ENCODE measurements at regions of chrX and their contacts with region 1.

Region 1: GRCh38 chrX:97374266-97374665 is 490.6 kb downstream of the RPA4 start:
- DNase-seq: no peak
- ATAC-seq: no peak
- H3K4me3 ChIP-seq: no peak overlapping the region
- H3K27ac ChIP-seq: no peak overlapping the region
- H3K4me1 ChIP-seq: no peaks in the 10 kb centered on the region
- CTCF ChIP-seq: no peak
- EP300 ChIP-seq: no peak
- POLR2A ChIP-seq: no peak
- RAD21 ChIP-seq: no peak

Region 2: GRCh38 chrX:97389761-97390192 is 15.5 kb after region 1 on chrX:
- CTCF ChIA-PET with region 1: no interaction called
- POLR2A ChIA-PET with region 1: interaction called, 10 read pairs
- DNase-seq: peak in 1 of 2 experiments; percentile 55
- ATAC-seq: peak; percentile 56 to 85
- H3K4me3 ChIP-seq: no peak overlapping the region
- H3K27ac ChIP-seq: peak overlapping the region; percentile 83 to 87
- H3K4me1 ChIP-seq: peaks cover 12% of the 10 kb centered on the region; the same call in 2 of the 3 replicates
- CTCF ChIP-seq: no peak
- EP300 ChIP-seq: 0 out of 5 replicates have a peak, but pooled peaks of 1 of the 2 experiments have one; percentile 16
- POLR2A ChIP-seq: no peak
- RAD21 ChIP-seq: no peak; a peak in 1 of 5 replicates

Measured in A549 (cell line).